ENCODE measurements at regions of chr12 and their contacts with region 1.

Region 1: DNA sequence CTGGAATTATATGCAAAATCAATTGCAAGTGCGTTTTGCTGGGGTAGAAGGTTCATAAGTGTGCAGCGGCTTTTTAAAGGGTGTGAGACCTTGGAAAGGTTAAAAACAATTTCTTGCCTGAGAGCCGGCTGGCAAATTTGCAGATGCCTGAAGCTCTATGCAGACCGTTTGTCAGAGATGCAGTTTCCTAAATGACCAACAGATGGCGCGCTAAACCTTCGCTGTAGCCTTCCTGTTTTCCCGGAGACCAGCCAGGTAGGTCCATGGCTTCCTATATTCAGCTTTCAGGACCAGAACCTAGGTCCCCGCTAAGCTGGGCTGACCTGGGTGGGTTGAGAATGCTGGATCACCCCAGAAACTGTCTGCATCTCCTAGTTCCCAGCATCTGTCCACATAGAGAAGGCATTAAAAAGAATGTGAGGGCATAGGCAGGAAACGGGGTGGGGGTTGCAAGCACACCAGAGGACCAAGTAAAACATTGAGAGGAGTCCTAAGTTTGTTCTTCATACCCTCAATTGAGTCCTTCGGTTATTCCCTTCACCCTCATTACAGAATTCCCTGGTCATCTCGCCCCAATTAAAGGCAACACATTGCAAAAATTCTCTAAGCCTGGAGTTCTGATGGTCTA is 5.7 kb upstream of the NOS1 start:
- DNase-seq: peak; percentile 66
- H3K4me3 Mint-ChIP-seq: no peak overlapping the region
- H3K27ac Mint-ChIP-seq: no peak overlapping the region
- H3K4me1 Mint-ChIP-seq: no peaks in the 10 kb centered on the region
- H3K27me3 Mint-ChIP-seq: peaks cover 12% of the 10 kb centered on the region

Region 2: DNA sequence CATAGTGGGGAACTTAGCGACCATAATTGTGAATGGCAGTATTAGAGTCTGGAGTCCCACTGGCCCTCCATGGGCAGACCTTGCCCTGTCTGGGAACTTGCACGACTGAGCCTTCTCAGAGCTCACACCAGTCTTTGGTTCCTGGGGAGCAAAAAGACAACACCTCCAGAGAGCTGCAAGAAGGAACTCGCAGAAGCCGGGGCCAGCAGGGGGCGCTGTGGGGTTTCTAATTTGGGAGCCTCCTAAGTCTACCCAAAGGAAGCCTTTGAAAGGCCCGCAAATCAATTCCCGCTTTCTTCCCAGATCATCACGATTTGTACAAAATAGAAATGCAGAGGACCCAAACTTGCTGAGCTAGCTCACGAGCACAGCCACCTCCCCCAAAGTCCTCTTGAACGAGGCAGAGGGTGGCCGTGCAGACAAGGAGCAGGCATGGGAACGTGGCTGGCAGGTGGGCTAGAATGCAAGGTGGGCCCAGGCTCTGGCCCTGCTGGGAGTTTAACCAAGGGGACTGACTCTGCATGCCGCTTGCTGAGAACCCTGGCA is 130.6 kb before region 1 on chr12:
- CTCF ChIA-PET with region 1: interaction called, 9 read pairs
- POLR2A ChIA-PET with region 1: no interaction called
- intact Hi-C with region 1: loop called (anchors 10 kb)
- DNase-seq: peak; percentile 86
- H3K4me3 Mint-ChIP-seq: no peak overlapping the region
- H3K27ac Mint-ChIP-seq: no peak overlapping the region
- H3K4me1 Mint-ChIP-seq: no peaks in the 10 kb centered on the region
- H3K27me3 Mint-ChIP-seq: peaks cover 9% of the 10 kb centered on the region

Region 3: GRCh38 chr12:117587631-117588287 is 220.6 kb after region 1 on chr12:
- CTCF ChIA-PET with region 1: interaction called, 31 read pairs
- POLR2A ChIA-PET with region 1: no interaction called
- intact Hi-C with region 1: no loop called
- DNase-seq: peak; percentile 58
- H3K4me3 Mint-ChIP-seq: no peak overlapping the region
- H3K27ac Mint-ChIP-seq: no peak overlapping the region
- H3K4me1 Mint-ChIP-seq: no peaks in the 10 kb centered on the region
- H3K27me3 Mint-ChIP-seq: no peaks in the 10 kb centered on the region

Region 4: DNA sequence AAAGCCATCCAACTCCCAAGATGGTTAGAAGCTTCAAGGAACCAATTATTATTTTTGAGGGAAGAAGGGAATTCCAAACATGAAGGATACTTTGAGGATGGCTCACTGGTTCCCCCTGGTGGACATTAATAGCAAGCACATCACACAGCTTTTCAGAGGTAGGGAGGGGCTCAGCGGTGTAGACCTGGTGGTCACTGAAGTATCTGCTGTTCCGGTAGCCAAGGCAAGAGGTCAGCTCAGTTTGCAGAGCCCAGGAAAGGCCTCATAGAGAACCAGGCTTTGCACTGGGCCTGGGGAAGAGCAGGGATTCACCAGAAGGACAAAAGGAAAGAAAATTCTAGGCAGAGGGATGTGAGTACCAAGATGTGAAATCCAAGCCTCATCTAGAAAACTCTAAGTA is 482.9 kb after region 1 on chr12:
- CTCF ChIA-PET with region 1: interaction called, 4 read pairs
- POLR2A ChIA-PET with region 1: no interaction called
- intact Hi-C with region 1: loop called (anchors 5 kb)
- DNase-seq: peak; percentile 13
- H3K4me3 Mint-ChIP-seq: no peak overlapping the region
- H3K27ac Mint-ChIP-seq: no peak overlapping the region
- H3K4me1 Mint-ChIP-seq: no peaks in the 10 kb centered on the region
- H3K27me3 Mint-ChIP-seq: peaks cover 4% of the 10 kb centered on the region

Measured in activated CD4-positive, alpha-beta memory T cell treated with anti-CD3 and anti-CD28 coated beads for 36 hours (primary cell).